ENCODE measurements at regions of chr3 and their contacts with region 1.

Region 1: DNA sequence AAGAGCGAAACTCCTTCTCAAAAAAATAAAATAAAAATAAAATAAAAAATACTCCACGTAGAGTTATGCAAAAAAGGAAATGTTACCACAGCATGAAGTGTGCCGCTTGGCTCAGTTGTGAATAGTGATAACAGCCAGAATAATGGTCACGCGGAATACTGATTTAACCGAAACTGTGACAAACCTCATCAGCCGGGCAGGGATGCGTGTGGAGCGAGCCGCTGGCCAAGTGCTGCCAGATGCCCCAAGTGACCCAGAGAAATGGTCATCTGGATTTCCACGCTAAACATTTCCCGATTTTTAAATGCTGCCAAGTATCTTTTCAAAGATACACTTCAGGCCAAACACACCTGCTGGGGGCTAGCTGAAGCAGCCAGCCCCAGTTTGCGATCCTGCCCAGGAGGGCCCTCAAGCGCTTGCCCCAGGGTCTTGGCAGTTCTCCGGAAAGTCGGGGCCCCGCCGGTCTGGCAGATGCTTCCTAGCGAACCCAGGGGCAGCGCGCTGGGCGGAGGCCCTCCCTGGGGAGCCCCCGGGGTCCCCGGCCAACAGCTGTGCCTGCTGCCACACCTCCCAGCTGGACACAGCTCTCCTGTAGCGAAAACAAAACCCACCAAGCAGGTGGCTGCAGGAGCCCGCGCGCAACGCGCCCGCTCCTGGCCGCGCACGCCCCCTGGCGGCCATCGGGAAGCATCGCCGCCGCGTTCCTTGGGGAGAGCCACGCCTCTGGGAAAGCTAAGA is 35.1 kb downstream of the CMTM6 start:
- DNase-seq: peak; percentile 36
- ATAC-seq: peak; percentile 84
- H3K4me3 ChIP-seq: peak overlapping the region in 1 of 2 experiments; percentile 23; a peak in 1 of 4 replicates
- H3K27ac ChIP-seq: no peak overlapping the region
- H3K4me1 ChIP-seq: peaks cover 22% of the 10 kb centered on the region
- H3K27me3 ChIP-seq: no peaks in the 10 kb centered on the region
- CTCF ChIP-seq: peak; percentile 97

Region 2: GRCh38 chr3:32177702-32178198 is 289.8 kb before region 1 on chr3:
- CTCF ChIA-PET with region 1: no interaction called
- POLR2A ChIA-PET with region 1: no interaction called
- in situ Hi-C with region 1: no loop called
- intact Hi-C with region 1: loop called (anchors 5 kb)
- DNase-seq: peak; percentile 80
- ATAC-seq: peak; percentile 96
- H3K4me3 ChIP-seq: peak overlapping the region in 1 of 2 experiments; percentile 30; a peak in 2 of 4 replicates
- H3K27ac ChIP-seq: no peak overlapping the region
- H3K4me1 ChIP-seq: peaks cover 5% of the 10 kb centered on the region
- H3K27me3 ChIP-seq: no peaks in the 10 kb centered on the region
- CTCF ChIP-seq: peak; percentile 85

Region 3: GRCh38 chr3:32414520-32415202 is 52.8 kb before region 1 on chr3:
- CTCF ChIA-PET with region 1: no interaction called
- POLR2A ChIA-PET with region 1: no interaction called
- in situ Hi-C with region 1: no loop called
- intact Hi-C with region 1: loop called (anchors 5 kb)
- DNase-seq: no peak
- ATAC-seq: peak; percentile 53; the same call in 1 of the 2 replicates
- H3K4me3 ChIP-seq: no peak overlapping the region
- H3K27ac ChIP-seq: no peak overlapping the region
- H3K4me1 ChIP-seq: peaks cover 4% of the 10 kb centered on the region
- H3K27me3 ChIP-seq: no peaks in the 10 kb centered on the region
- CTCF ChIP-seq: no peak

Region 4: GRCh38 chr3:32655167-32655566 is 187.7 kb after region 1 on chr3:
- CTCF ChIA-PET with region 1: interaction called, 13 read pairs
- POLR2A ChIA-PET with region 1: no interaction called
- in situ Hi-C with region 1: no loop called
- intact Hi-C with region 1: no loop called
- DNase-seq: no peak
- ATAC-seq: no peak
- H3K4me3 ChIP-seq: no peak overlapping the region
- H3K27ac ChIP-seq: no peak overlapping the region
- H3K4me1 ChIP-seq: no peaks in the 10 kb centered on the region
- H3K27me3 ChIP-seq: peaks cover 9% of the 10 kb centered on the region; the same call in 1 of the 2 replicates
- CTCF ChIP-seq: no peak

Measured in Panc1 (cell line).